PC-9 (cell line): ENCODE measurements at regions of chr18 and their contacts with region 1.

Region 1: DNA sequence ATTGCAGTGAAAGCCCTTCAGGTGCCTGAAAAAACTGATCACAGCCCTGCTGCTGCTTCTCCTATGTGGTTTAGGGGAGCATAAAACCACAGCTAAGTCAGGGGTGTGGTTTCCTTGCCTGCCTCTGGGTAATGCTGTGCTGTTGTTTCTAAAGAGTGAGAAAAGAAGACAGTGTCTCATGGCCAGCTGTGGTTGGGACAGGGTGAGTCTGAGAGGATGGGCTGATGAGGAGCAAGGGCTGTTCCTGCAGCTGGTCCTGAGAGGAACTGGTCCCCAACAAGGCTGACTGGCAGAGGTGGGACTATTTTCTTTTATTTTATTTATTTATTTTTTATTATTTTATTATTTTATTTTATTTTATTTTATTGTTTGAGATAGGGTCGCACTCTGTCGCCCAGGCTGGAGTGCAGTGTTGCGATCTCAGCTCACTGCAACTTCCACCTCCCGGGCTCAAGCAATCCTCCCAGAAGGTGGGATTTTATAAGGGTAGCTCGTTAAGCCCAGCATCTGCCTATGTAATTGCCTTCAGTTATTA is 236.7 kb downstream of the FHOD3 start:
- DNase-seq: no peak
- H3K4me3 ChIP-seq: no peak overlapping the region
- H3K27ac ChIP-seq: no peak overlapping the region
- H3K4me1 ChIP-seq: 0 out of 2 replicates have a peak, but pooled peaks cover 5% of the 10 kb centered on the region
- H3K27me3 ChIP-seq: no peaks in the 10 kb centered on the region
- CTCF ChIP-seq: no peak

Region 2: GRCh38 chr18:36441426-36442240 is 92.6 kb before region 1 on chr18:
- CTCF ChIA-PET with region 1: no interaction called
- POLR2A ChIA-PET with region 1: no interaction called
- intact Hi-C with region 1: loop called (anchors 5 kb)
- DNase-seq: peak in 1 of 2 experiments; percentile 34
- H3K4me3 ChIP-seq: no peak overlapping the region
- H3K27ac ChIP-seq: peak overlapping the region; percentile 16; the same call in 1 of the 2 replicates
- H3K4me1 ChIP-seq: 0 out of 2 replicates have a peak, but pooled peaks cover 4% of the 10 kb centered on the region
- H3K27me3 ChIP-seq: no peaks in the 10 kb centered on the region
- CTCF ChIP-seq: no peak

Region 3: GRCh38 chr18:37065254-37065653 is 531.0 kb after region 1 on chr18:
- CTCF ChIA-PET with region 1: no interaction called
- POLR2A ChIA-PET with region 1: no interaction called
- intact Hi-C with region 1: no loop called
- DNase-seq: no peak
- H3K4me3 ChIP-seq: no peak overlapping the region
- H3K27ac ChIP-seq: no peak overlapping the region
- H3K4me1 ChIP-seq: no peaks in the 10 kb centered on the region
- H3K27me3 ChIP-seq: no peaks in the 10 kb centered on the region
- CTCF ChIP-seq: no peak